ENCODE measurements at regions of chr14 and their contacts with region 1.

Region 1: GRCh38 chr14:99266181-99267178 is 5.5 kb downstream of the BCL11B start:
- DNase-seq: peak; percentile 76
- H3K4me3 Mint-ChIP-seq: peak overlapping the region; percentile 57
- H3K27ac Mint-ChIP-seq: peak overlapping the region; percentile 28
- H3K4me1 Mint-ChIP-seq: peaks cover 17% of the 10 kb centered on the region
- H3K27me3 Mint-ChIP-seq: no peaks in the 10 kb centered on the region
- CTCF ChIP-seq: peak; percentile 98

Region 2: GRCh38 chr14:98138666-98139065 is 1127.8 kb before region 1 on chr14:
- CTCF ChIA-PET with region 1: interaction called, 7 read pairs
- POLR2A ChIA-PET with region 1: no interaction called
- intact Hi-C with region 1: loop called (anchors 5 kb)
- DNase-seq: peak; percentile 45
- H3K4me3 Mint-ChIP-seq: no peak overlapping the region
- H3K27ac Mint-ChIP-seq: no peak overlapping the region
- H3K4me1 Mint-ChIP-seq: peaks cover 12% of the 10 kb centered on the region
- H3K27me3 Mint-ChIP-seq: no peaks in the 10 kb centered on the region
- CTCF ChIP-seq: peak; percentile 46

Region 3: GRCh38 chr14:98293576-98293975 is 972.9 kb before region 1 on chr14:
- CTCF ChIA-PET with region 1: no interaction called
- POLR2A ChIA-PET with region 1: no interaction called
- intact Hi-C with region 1: loop called (anchors 5 kb)
- DNase-seq: peak; percentile 68
- H3K4me3 Mint-ChIP-seq: no peak overlapping the region
- H3K27ac Mint-ChIP-seq: no peak overlapping the region
- H3K4me1 Mint-ChIP-seq: peaks cover 16% of the 10 kb centered on the region
- H3K27me3 Mint-ChIP-seq: no peaks in the 10 kb centered on the region
- CTCF ChIP-seq: no peak

Region 4: DNA sequence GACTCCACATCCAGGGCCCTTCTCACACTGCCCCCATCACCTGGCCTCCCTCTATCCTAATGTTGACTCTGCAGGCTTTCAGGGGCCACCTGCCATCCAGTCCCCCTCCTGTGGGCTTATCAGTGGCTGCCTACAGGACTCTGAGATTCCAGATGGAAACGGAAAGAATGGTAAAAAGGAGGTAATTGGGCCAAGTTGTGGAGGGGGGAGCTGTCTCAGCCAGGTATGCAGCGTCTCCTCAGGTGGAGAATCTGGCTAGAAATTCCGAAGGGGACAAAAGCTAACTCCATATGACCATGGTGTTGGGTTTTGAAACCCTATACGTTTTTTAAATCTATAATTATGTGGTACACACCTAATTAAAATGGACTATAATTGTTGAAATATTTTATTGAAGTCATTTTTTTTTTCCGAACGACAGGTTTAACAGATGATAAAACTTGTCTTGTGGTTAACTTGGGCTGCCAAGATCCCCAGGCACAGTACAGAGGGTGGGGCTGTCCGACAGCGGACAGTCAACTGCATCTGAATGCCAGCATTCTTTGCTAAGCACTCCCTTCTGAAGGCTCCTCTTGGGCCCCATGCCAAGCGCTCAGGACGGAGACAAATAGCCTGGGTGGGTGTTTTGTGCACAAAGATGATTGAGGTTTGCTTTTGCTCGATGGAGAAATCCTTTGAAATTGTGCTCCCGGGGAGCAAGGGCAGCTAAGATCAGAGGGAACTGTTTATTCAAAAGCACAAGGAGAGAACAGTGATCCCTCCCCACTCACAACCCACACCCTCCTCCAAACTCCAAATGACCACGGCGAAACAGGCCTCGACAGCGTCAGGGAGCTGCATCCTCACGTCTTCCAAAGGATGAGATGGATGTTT is 360.1 kb before region 1 on chr14:
- CTCF ChIA-PET with region 1: interaction called, 4 read pairs
- POLR2A ChIA-PET with region 1: interaction called, 3 read pairs
- intact Hi-C with region 1: loop called (anchors 10 kb)
- DNase-seq: peak; percentile 96
- H3K4me3 Mint-ChIP-seq: peak overlapping the region; percentile 28
- H3K27ac Mint-ChIP-seq: peak overlapping the region; percentile 80
- H3K4me1 Mint-ChIP-seq: peaks cover 52% of the 10 kb centered on the region
- H3K27me3 Mint-ChIP-seq: no peaks in the 10 kb centered on the region
- CTCF ChIP-seq: no peak

Region 5: GRCh38 chr14:99192028-99192621 is 74.4 kb before region 1 on chr14:
- CTCF ChIA-PET with region 1: no interaction called
- POLR2A ChIA-PET with region 1: no interaction called
- intact Hi-C with region 1: loop called (anchors 5 kb)
- DNase-seq: peak; percentile 85
- H3K4me3 Mint-ChIP-seq: peak overlapping the region; percentile 72
- H3K27ac Mint-ChIP-seq: peak overlapping the region; percentile 57
- H3K4me1 Mint-ChIP-seq: peaks cover 13% of the 10 kb centered on the region
- H3K27me3 Mint-ChIP-seq: no peaks in the 10 kb centered on the region
- CTCF ChIP-seq: no peak

Region 6: DNA sequence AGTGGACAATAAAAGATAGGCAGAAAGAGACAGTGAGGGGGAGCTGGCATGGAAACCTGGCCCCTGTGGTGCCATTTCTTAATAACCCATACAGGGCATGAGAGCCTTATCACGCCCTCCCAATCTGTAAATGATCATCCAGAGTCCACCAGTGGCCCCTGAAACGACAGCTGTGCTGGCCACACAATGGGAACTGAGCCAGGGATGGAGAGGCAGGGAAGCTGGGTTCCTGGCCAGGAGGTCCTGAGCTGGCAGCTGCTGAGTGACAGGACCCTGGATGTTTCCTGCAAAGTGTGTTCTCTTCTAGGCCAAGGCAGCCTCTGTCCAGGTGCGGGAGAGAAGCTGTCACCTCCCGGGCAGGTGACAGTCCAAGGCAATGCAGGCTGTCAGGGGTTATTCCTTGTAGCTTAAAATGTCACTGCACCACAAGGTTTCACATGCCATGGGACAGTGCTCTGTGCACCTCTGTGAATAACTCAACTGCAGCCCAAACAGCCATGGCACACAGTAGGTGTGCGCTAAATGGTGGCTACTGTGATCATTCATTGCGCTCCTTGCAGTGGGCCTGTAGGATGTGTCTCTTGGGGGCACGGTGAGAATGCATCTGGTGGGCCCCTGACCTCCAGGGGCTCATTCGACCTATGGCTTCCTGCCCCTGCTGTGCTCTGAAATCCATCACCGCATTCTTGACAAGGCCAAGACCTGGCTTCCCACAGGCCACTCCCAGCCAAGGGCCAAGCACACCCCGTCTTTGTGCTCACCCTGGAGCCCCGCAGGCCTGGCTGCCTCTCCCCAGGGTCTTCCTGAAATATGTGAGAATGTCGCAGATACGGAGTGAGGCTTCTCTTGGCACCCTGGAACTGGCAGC is 51.8 kb after region 1 on chr14:
- CTCF ChIA-PET with region 1: no interaction called
- POLR2A ChIA-PET with region 1: no interaction called
- intact Hi-C with region 1: no loop called
- DNase-seq: no peak
- H3K4me3 Mint-ChIP-seq: no peak overlapping the region
- H3K27ac Mint-ChIP-seq: no peak overlapping the region
- H3K4me1 Mint-ChIP-seq: peaks cover 6% of the 10 kb centered on the region
- H3K27me3 Mint-ChIP-seq: peaks cover 15% of the 10 kb centered on the region
- CTCF ChIP-seq: no peak

Measured in MCF 10A (cell line).